MCF 10A (cell line): ENCODE measurements at regions of chr1 and their contacts with region 1.

Region 1: GRCh38 chr1:246931549-246932365 is at the start of gene AHCTF1:
- DNase-seq: peak; percentile 100
- H3K4me3 Mint-ChIP-seq: peak within 1 kb of the TSS; percentile 88
- H3K27ac Mint-ChIP-seq: peak within 1 kb of the TSS; percentile 95
- H3K4me1 Mint-ChIP-seq: peaks cover 29% of the 10 kb centered on the region
- H3K27me3 Mint-ChIP-seq: no peaks in the 10 kb centered on the region
- CTCF ChIP-seq: no peak
- total RNA-seq, gene AHCTF1: 79.5 and 112 TPM in 2 replicates

Region 2: DNA sequence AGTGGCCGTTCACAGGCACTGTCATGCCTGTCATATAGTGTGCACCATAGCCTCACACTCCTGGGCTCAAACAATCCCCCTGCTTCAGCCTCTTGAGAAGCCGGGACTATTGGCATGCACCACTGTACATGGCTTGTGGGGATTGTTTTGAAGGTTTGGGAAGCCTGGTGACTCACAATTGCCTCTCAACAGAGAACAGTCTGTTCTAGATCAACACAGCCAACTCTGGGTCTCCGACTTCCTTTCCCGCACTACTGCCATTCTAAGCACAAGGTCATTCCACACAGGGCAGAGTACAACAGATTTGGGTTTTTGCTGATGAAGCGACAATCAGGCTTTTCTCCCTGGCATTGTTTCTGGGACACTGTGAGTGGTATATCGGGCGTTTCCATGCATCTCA is 15.5 kb after region 1 on chr1:
- CTCF ChIA-PET with region 1: interaction called, 6 read pairs
- POLR2A ChIA-PET with region 1: interaction called, 57 read pairs
- intact Hi-C with region 1: no loop called
- DNase-seq: peak; percentile 99
- H3K4me3 Mint-ChIP-seq: peak overlapping the region; percentile 10
- H3K27ac Mint-ChIP-seq: peak overlapping the region; percentile 90
- H3K4me1 Mint-ChIP-seq: peaks cover 25% of the 10 kb centered on the region
- H3K27me3 Mint-ChIP-seq: no peaks in the 10 kb centered on the region
- CTCF ChIP-seq: no peak

Region 3: DNA sequence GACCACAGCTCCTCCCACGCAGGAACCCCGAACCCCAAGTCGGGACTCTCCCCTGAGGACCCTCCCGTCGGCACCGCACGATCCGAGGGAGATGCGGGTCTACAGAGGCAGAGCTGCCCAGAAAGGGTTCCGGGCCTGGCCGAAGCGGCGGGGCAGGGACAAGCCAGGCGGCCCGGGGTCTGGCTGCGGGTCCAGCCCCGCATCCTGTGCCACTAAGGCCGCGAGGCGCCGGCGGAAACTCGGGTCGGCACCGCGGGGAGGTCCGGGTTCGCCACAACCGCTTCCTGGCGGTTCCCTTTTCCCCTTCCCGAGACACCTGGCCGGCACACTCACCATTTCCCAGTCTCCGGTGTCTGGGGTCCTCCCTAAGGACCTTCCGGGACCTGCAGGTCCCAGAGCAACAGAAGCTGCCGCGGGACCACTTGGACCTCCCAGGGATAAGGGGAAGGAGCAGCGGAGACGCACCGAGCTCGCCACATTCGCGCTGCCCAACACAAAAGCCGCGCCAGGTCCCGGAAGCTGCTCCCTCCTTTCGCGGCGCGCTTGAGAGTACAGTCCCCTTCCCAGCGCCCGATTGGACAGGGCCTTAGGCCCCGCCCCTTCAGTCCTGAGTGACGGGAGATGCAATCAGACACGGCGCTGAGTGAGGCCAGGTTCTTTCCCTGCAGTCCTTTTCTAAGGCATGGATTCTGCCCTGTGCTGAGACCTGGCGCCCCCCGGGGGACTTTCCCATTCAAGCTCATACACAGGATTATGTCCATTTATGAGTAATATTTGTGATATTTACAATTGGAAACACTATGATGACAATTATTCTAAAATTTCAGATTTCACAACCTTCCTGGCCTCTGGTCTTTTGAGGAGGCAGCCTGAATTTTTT is 146.7 kb after region 1 on chr1 and contains the start of gene ZNF670:
- CTCF ChIA-PET with region 1: interaction called, 4 read pairs
- POLR2A ChIA-PET with region 1: interaction called, 56 read pairs
- intact Hi-C with region 1: loop called (anchors 1 kb)
- DNase-seq: peak; percentile 100
- H3K4me3 Mint-ChIP-seq: peak within 1 kb of the TSS; percentile 78
- H3K27ac Mint-ChIP-seq: peak within 1 kb of the TSS; percentile 92
- H3K4me1 Mint-ChIP-seq: peaks cover 18% of the 10 kb centered on the region
- H3K27me3 Mint-ChIP-seq: no peaks in the 10 kb centered on the region
- CTCF ChIP-seq: no peak
- total RNA-seq, gene ZNF670: 7.1 and 7.7 TPM in 2 replicates

Region 4: GRCh38 chr1:247210376-247211117 is 278.8 kb after region 1 on chr1:
- CTCF ChIA-PET with region 1: no interaction called
- POLR2A ChIA-PET with region 1: interaction called, 16 read pairs
- intact Hi-C with region 1: no loop called
- DNase-seq: peak; percentile 99
- H3K4me3 Mint-ChIP-seq: peak overlapping the region; percentile 98
- H3K27ac Mint-ChIP-seq: peak overlapping the region; percentile 98
- H3K4me1 Mint-ChIP-seq: peaks cover 23% of the 10 kb centered on the region
- H3K27me3 Mint-ChIP-seq: peaks cover 25% of the 10 kb centered on the region
- CTCF ChIP-seq: no peak

Region 5: DNA sequence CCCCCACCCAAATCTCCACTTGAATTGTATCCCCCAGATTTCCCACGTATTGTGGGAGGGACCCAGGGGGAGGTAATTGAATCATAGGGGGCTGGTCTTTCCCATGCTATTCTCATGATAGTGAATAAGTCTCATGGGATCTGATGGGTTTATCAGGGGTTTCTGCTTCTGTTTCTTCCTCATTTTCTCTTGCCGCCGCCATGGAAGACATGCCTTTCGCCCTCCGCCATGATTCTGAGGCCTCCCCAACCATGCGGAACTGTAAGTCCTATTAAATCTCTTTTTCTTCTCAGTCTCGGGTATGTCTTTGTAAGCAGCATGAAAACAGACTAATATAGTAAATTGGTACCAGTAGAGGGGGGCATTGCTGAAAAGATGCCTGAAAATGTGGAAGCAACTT is 433.3 kb after region 1 on chr1:
- CTCF ChIA-PET with region 1: no interaction called
- POLR2A ChIA-PET with region 1: no interaction called
- intact Hi-C with region 1: no loop called
- DNase-seq: no peak
- H3K4me3 Mint-ChIP-seq: no peak overlapping the region
- H3K27ac Mint-ChIP-seq: no peak overlapping the region
- H3K4me1 Mint-ChIP-seq: no peaks in the 10 kb centered on the region
- H3K27me3 Mint-ChIP-seq: no peaks in the 10 kb centered on the region
- CTCF ChIP-seq: no peak